ENCODE measurements at regions of chr17 and their contacts with region 1.

Region 1: DNA sequence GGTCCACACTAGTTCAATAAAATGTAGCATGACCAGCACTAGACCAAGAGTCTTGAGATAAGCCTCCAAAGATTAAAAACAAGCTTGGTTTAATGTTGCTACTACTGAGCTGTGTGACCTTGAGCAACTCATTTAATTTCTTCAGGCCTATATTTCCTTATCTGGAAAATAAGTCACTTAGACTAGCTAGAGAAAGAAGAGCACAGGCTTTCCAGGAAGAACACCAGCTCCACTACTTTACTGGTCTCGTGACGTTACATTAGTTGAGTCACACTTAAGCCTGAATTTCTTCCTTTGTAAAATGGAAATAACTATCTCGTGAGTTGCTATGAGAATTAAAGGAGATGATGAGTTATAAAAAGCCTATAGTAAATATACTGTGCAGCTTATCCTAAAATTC is 5.4 kb downstream of the HELZ start:
- DNase-seq: no peak
- H3K4me3 ChIP-seq: no peak overlapping the region
- H3K27ac ChIP-seq: no peak overlapping the region
- H3K4me1 ChIP-seq: peaks cover 15% of the 10 kb centered on the region
- H3K27me3 ChIP-seq: no peaks in the 10 kb centered on the region
- CTCF ChIP-seq: no peak

Region 2: DNA sequence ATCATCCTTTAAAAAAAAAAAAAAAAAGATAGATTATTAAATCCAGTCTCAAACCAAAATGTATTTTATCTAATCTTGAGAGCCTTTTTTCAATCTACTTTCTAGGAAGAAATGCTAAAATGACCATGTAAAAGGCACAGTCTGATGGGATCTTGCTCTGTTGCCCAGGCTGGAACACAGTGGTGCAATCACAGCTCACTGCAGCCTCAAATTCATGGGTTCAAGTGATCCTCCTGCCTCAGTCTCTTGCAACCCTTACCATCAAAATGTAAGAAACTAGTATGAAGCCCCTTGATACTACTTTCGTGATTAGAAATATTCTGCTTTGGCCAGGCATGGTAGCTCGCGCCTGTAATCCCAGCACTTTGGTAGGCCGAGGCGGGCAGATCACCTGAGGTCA is 65.4 kb before region 1 on chr17:
- CTCF ChIA-PET with region 1: no interaction called
- POLR2A ChIA-PET with region 1: no interaction called
- intact Hi-C with region 1: loop called (anchors 2 kb)
- DNase-seq: no peak
- H3K4me3 ChIP-seq: no peak overlapping the region
- H3K27ac ChIP-seq: no peak overlapping the region
- H3K4me1 ChIP-seq: no peaks in the 10 kb centered on the region
- H3K27me3 ChIP-seq: no peaks in the 10 kb centered on the region
- CTCF ChIP-seq: no peak

Region 3: DNA sequence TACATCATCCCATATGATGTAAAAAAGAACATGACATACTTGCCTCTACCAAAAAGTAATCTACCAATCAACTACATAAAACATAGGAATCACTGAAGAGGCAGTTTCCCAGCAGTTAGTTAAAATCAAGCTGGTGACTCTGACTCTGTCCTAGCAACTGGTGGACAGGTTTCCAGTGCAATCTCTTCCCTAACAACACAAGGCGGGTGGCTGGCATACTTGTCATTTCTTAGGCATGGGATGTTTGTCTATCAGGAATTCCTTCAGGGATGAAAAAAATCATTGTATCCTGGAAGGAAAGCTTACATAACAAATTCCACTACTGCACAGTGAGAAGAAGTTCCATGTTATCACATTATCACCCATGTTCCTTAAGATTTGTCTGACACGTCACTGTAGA is 45.5 kb before region 1 on chr17:
- CTCF ChIA-PET with region 1: no interaction called
- POLR2A ChIA-PET with region 1: no interaction called
- intact Hi-C with region 1: loop called (anchors 2 kb)
- DNase-seq: peak in 1 of 2 experiments; percentile 5
- H3K4me3 ChIP-seq: no peak overlapping the region
- H3K27ac ChIP-seq: no peak overlapping the region
- H3K4me1 ChIP-seq: no peaks in the 10 kb centered on the region
- H3K27me3 ChIP-seq: no peaks in the 10 kb centered on the region
- CTCF ChIP-seq: no peak